Thyroid gland (tissue), 4 donors: ENCODE measurements at regions of chr11 and their contacts with region 1.

Region 1: DNA sequence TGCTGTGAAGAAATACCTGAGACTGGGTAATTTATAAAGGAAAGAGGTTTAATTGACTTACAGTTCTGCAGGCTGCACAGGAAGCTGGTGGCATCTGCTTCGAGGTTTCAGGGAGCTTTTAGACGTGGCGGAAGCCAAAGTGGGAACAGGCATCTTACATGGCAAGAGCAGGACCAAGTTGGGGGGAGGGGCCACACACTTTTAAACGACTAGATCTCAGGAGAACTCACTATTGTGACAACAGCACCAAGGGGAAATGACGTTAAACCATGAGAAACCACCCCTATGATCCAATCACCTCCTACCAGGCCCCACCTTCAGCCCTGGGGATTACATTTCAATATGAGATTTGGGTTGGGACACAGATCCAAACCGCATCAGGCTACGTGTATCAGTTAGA is 11.1 kb upstream of the SCGB1D4 start:
- DNase-seq: no peak
- H3K4me3 ChIP-seq: no peak overlapping the region
- H3K27ac ChIP-seq: no peak overlapping the region
- H3K4me1 ChIP-seq: no peaks in the 10 kb centered on the region
- H3K27me3 ChIP-seq: no peaks in the 10 kb centered on the region
- CTCF ChIP-seq: no peak
- POLR2A ChIP-seq: no peak

Region 2: DNA sequence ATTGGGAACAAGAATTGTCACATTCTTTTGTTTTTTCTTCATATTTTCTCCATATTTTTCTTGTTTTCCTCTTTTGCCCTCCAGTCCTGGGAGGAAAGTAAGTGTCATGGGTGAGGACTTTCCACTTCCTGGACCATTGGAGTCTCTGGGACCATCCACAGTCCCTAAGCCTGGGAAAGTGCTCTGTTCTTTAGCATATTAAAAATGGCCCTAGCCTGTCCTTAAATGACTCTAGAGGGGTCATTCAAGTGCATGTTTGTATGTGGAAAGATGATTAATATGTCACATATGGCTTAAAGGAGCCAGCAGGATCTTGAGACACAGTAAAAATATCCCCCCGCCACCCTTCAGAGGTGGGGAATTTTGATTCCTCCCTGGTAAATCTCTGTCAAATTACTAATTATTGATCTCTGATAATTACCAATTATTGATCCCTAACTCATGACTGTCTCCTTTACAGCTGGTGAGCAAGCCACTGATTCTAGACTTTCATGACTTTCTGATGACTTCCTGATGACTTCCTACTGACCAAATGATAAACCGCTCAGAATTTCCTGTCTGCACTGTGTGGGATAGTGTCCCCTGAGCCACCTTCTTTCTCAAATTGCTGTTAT is 139.9 kb before region 1 on chr11:
- intact Hi-C with region 1: loop called (anchors 5 kb)
- DNase-seq: no peak
- H3K4me3 ChIP-seq: no peak overlapping the region
- H3K27ac ChIP-seq: no peak overlapping the region
- H3K4me1 ChIP-seq: no peaks in the 10 kb centered on the region
- H3K27me3 ChIP-seq: no peaks in the 10 kb centered on the region
- CTCF ChIP-seq: no peak
- POLR2A ChIP-seq: no peak